ENCODE measurements at regions of chr3 and their contacts with region 1.

Region 1: DNA sequence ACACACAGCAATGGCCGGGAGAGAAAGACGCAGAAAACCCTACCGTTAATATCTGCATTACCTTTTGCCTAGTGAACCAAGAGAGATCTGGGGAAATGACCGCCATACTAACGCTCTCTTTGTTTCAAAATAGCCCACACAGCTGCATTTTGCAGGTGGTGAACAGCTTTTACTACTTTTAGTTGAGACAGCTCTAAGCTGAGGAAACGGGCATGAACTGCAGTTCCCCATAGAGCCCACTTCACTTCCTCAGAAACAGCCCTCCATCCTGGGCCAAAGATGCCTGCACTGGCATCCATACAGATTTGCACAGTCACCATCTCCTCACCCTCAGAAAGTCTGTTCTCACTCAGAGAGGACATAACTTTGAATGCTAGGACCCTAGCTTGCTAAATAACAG is 45.0 kb downstream of the ZNF860 start:
- DNase-seq: no peak
- H3K4me3 ChIP-seq: no peak overlapping the region
- H3K27ac ChIP-seq: no peak overlapping the region
- H3K4me1 ChIP-seq: no peaks in the 10 kb centered on the region
- H3K27me3 ChIP-seq: no peaks in the 10 kb centered on the region
- CTCF ChIP-seq: no peak
- EP300 ChIP-seq: no peak
- POLR2A ChIP-seq: no peak

Region 2: DNA sequence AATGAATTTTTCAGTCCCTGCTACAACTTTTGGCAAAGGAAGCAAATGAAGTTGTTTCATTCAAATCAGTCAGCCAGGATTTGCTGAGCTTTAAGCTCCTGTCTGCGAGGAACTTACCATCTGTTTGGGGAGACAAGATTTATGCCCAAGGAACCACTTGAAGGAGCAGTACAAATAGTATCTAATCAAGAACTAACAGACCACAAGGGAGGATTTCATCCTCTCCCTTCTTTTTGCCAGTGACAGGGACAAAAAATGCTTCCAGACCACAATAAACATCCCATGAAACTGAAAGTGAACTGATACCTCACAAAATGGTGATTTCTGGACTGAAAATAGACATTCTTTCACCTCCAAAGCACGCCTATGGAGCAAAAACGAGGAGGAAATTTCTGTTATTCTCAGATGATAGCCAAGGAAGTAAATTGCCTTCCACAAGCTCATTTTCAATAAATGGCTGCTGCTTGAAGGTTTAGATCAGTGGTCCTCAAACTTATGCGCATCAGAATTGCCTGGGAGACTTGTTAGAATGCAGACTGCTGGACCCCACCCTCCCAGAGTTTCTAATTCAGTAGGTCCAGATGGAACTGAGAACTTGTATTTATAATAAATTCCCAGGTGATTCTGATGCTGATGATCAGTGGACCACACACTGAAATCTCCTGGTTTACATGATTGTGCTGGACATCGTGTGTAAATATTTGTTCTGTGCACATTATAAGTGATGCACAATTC is 929.8 kb before region 1 on chr3:
- intact Hi-C with region 1: no loop called
- DNase-seq: no peak
- H3K4me3 ChIP-seq: no peak overlapping the region
- H3K27ac ChIP-seq: no peak overlapping the region
- H3K4me1 ChIP-seq: no peaks in the 10 kb centered on the region
- H3K27me3 ChIP-seq: no peaks in the 10 kb centered on the region
- CTCF ChIP-seq: no peak
- EP300 ChIP-seq: no peak
- POLR2A ChIP-seq: no peak

Region 3: GRCh38 chr3:32138545-32139104 is 112.0 kb after region 1 on chr3:
- intact Hi-C with region 1: loop called in 3 of 4 experiments (anchors 5 kb)
- DNase-seq: no peak
- H3K4me3 ChIP-seq: no peak overlapping the region
- H3K27ac ChIP-seq: no peak overlapping the region
- H3K4me1 ChIP-seq: no peaks in the 10 kb centered on the region
- H3K27me3 ChIP-seq: no peaks in the 10 kb centered on the region
- CTCF ChIP-seq: no peak
- EP300 ChIP-seq: no peak
- POLR2A ChIP-seq: no peak

Region 4: DNA sequence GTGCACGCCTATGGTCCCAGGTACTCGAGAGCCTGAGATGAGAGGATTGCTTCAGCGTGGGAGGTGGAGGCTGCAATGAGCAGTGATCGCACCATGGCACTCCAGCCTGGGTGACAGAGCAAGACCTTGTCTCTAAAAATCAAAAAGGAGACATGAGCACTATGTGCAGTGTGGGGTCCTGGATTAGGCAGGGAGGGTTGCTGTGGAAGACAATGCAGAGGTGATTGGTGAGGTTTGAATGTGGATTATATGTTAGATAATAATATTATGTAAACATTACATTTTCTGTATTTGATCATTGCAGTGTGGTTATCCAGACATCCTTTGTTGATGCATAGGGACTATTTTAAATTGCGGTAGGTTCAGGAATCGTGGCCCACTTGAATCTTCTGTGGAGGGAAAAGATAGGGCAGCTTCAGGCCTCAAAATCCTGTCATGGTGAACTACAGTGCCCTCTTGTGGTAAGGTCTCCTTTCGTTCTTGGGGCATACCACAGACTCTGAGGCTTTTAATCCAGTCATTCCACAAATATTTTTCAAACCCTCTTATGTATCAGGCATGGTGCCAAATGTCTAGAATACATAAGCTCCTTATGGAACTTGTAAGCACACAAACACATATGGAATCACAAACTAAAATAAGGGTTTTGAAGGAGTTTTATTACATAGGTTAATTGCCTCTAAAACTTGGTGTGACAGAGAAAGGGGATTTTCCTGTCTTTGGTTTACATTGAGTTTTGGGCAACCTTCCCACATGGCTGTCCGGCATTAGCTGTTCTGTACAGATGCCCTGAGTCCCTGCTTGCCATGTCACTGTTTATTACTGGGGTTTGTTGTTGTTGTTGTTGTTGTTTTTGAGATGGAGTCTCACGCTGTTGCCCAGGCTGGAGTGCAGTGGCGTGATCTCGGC is 117.5 kb after region 1 on chr3:
- intact Hi-C with region 1: loop called in 3 of 4 experiments (anchors 5 kb)
- DNase-seq: peak in 4 of 5 donors; percentile 22 to 58 (median 31)
- H3K4me3 ChIP-seq: no peak overlapping the region
- H3K27ac ChIP-seq: no peak overlapping the region
- H3K4me1 ChIP-seq: no peaks in the 10 kb centered on the region
- H3K27me3 ChIP-seq: no peaks in the 10 kb centered on the region
- CTCF ChIP-seq: peak; percentile 55 to 63 (median 57)
- EP300 ChIP-seq: no peak
- POLR2A ChIP-seq: no peak

Region 5: DNA sequence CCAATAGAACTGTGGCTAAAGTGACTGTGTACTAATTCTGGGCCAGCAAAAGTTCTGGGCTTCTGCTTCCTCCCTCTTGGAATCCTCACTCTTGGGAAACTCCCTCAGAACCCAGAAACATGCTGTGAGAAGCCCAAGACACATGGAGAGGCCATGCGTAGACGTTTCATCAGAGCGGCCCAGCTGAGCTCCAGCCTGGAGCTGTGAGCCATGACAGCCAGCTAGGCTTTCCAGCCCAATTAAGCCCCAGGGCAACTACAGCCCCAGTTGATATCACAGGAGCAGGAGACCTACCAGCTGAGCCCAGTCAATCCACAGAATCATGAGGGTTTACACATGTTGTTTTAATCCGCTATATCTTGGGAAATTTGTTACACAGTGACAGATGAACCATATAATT is 614.8 kb after region 1 on chr3:
- intact Hi-C with region 1: no loop called
- DNase-seq: no peak
- H3K4me3 ChIP-seq: no peak overlapping the region
- H3K27ac ChIP-seq: no peak overlapping the region
- H3K4me1 ChIP-seq: no peaks in the 10 kb centered on the region
- H3K27me3 ChIP-seq: no peaks in the 10 kb centered on the region
- CTCF ChIP-seq: no peak
- EP300 ChIP-seq: no peak
- POLR2A ChIP-seq: no peak

Measured in ovary (tissue), 10 donors.